ENCODE measurements at regions of chr9 and their contacts with region 1.

Region 1: DNA sequence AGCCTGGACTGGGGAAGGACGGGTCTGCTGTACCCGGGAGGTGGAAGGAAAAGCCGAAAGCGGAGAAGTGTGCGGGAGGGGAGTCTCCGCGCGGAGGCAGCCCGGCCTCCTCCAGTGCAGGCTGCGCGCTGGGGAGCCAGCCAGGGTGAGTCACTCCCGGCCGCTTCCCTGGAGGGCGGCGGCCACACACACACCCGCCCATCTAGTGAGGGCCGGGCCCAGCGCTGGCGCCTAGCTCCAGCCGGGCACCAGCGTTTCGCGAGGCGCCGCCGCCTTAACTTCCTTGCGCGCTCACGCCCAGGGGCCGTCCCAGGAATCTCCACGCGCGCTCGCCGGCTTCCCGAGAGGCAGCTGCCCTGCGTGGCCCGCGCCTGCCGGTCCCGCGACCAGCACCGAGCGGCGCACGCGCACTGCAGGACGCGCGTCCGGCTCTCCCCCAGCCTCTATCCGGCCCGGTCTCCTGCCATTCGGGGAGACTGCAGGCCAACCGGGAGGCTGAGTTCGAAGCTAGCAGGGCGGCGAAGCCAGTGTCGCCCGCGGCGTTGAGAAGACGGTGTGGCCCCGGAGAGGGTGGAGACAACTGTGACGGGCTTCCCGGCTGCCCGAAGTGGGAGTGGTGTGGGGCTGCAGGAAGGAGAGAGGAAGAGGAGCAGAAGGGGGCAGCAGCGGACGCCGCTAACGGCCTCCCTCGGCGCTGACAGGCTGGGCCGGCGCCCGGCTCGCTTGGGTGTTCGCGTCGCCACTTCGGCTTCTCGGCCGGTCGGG is at the start of gene JAK2:
- DNase-seq: peak; percentile 96
- ATAC-seq: peak; percentile 94
- H3K4me3 ChIP-seq: peak within 1 kb of the TSS; percentile 95
- H3K27ac ChIP-seq: peak within 1 kb of the TSS; percentile 98
- H3K4me1 ChIP-seq: peaks cover 38% of the 10 kb centered on the region
- H3K27me3 ChIP-seq: no peaks in the 10 kb centered on the region
- CTCF ChIP-seq: peak; percentile 56
- total RNA-seq, gene JAK2: 24.4 TPM

Region 2: GRCh38 chr9:4762108-4762885 is 222.5 kb before region 1 on chr9:
- intact Hi-C with region 1: loop called (anchors 5 kb)
- DNase-seq: peak; percentile 71
- ATAC-seq: peak; percentile 73
- H3K4me3 ChIP-seq: peak overlapping the region; percentile 36
- H3K27ac ChIP-seq: peak overlapping the region; percentile 38
- H3K4me1 ChIP-seq: peaks cover 14% of the 10 kb centered on the region
- H3K27me3 ChIP-seq: no peaks in the 10 kb centered on the region
- CTCF ChIP-seq: peak; percentile 80

Region 3: GRCh38 chr9:5593904-5594303 is 609.1 kb after region 1 on chr9:
- intact Hi-C with region 1: loop called (anchors 5 kb)
- DNase-seq: no peak
- ATAC-seq: no peak
- H3K4me3 ChIP-seq: no peak overlapping the region
- H3K27ac ChIP-seq: no peak overlapping the region
- H3K4me1 ChIP-seq: no peaks in the 10 kb centered on the region
- H3K27me3 ChIP-seq: no peaks in the 10 kb centered on the region
- CTCF ChIP-seq: no peak